Caco-2 (cell line): ENCODE measurements at regions of chr3 and their contacts with region 1.

Region 1: GRCh38 chr3:160163229-160163878 is 61.9 kb upstream of the C3orf80 start:
- DNase-seq: peak in 1 of 2 experiments; percentile 27
- H3K4me3 ChIP-seq: no peak overlapping the region
- H3K4me3 Mint-ChIP-seq: no peak overlapping the region
- H3K27ac Mint-ChIP-seq: no peak overlapping the region
- H3K4me1 ChIP-seq: peaks cover 7% of the 10 kb centered on the region
- H3K4me1 Mint-ChIP-seq: peaks cover 7% of the 10 kb centered on the region
- H3K27me3 ChIP-seq: no peaks in the 10 kb centered on the region
- H3K27me3 Mint-ChIP-seq: no peaks in the 10 kb centered on the region
- CTCF ChIP-seq: peak; percentile 36 to 55

Region 2: DNA sequence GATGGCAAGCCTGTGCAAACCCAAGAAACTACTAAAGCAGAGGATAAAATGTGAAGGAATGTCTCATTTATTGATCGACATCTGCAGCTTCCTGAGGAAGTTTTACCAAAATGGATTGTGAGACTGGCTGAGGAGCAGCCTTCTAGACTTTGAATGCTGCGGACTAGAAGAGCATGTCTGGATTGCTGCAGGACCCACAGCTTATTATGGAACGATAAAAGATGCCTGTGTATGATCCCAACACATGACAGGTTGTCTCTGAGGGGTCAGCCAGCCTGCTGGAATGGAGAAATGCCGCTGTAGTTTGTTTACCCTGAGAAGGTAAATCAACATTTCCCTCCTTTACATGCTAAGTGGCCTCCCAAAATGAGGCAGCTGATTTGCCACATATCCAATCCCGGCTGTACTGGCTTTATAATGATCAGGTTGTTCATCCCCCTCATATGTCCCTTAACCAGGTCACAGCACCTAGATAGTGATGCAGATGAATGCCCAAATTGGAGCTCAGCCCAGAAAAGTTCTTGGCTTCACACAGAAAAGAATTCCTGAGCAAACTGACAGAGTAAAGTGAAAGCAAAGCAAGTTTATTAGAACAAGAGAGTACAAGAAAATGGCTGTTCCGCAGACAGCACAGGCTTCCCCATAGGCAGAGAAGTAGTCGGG is 110.8 kb before region 1 on chr3:
- CTCF ChIA-PET with region 1: no interaction called
- POLR2A ChIA-PET with region 1: no interaction called
- intact Hi-C with region 1: no loop called
- DNase-seq: no peak
- H3K4me3 ChIP-seq: no peak overlapping the region
- H3K4me3 Mint-ChIP-seq: no peak overlapping the region
- H3K27ac Mint-ChIP-seq: no peak overlapping the region
- H3K4me1 ChIP-seq: no peaks in the 10 kb centered on the region
- H3K4me1 Mint-ChIP-seq: no peaks in the 10 kb centered on the region
- H3K27me3 ChIP-seq: no peaks in the 10 kb centered on the region
- H3K27me3 Mint-ChIP-seq: no peaks in the 10 kb centered on the region
- CTCF ChIP-seq: no peak

Region 3: DNA sequence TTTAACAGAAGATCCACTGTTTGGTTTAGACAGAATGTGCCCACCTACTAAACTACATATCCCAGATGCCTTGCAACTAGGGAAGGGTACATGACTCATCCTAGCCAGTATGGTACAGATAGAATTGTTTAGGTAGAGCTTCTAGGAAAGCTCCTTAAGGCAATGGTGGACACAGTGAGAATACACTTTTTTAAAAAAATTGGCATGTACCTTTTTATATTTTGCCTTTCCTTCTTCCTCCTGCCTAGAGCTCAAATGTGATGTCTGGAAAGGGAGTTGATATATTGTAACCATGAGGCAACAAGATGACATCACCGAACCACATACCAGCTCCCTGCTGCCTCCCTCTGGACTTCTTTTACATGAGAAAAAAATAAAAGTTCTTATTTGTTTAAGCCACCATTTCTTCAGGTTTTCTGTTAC is 47.5 kb after region 1 on chr3:
- CTCF ChIA-PET with region 1: interaction called, 17 read pairs
- POLR2A ChIA-PET with region 1: no interaction called
- intact Hi-C with region 1: loop called (anchors 1 kb)
- DNase-seq: peak in 1 of 2 experiments; percentile 51
- H3K4me3 ChIP-seq: no peak overlapping the region
- H3K4me3 Mint-ChIP-seq: no peak overlapping the region
- H3K27ac Mint-ChIP-seq: peak overlapping the region; percentile 65
- H3K4me1 ChIP-seq: peaks cover 3% of the 10 kb centered on the region; the same call in 1 of the 2 replicates
- H3K4me1 Mint-ChIP-seq: peaks cover 9% of the 10 kb centered on the region
- H3K27me3 ChIP-seq: no peaks in the 10 kb centered on the region
- H3K27me3 Mint-ChIP-seq: no peaks in the 10 kb centered on the region
- CTCF ChIP-seq: peak; percentile 19 to 40

Region 4: DNA sequence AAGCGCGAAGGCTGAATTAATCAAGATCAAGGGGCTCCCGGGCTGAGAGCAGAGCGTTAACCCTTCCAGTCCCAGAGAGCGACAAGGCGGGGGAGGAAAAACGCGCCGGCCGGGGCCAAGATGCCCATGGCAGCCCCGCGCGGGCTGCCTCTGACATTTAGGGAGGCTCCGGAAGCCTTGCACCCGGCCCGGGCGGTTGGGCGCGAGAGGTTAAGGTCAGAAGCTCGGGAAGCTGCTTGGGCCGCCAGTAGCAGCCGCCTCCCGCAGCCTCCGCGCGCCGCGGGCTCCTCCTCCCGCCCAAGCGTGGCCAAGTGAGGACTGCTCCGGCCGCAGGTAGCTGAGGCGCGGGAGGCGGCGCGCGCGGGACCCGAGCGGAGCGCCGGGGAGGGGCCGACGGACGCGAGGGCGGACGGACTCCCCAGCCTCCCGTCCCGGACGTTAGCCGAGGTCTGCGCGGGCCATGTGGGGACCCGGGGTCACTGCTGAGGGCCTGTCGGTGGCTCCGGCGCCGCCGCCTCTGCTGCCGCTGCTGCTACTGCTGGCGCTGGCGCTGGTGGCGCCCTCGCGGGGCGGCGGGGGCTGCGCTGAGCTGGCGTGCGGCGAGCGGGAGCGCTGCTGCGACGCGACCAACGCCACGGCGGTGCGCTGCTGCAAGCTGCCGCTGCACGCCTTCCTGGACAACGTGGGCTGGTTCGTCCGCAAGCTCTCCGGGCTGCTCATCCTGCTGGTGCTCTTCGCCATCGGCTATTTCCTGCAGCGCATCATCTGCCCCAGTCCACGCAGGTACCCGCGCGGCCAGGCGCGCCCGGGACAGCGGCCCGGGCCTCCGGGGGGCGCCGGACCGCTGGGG is 62.0 kb after region 1 on chr3 and contains the start of gene C3orf80:
- CTCF ChIA-PET with region 1: interaction called, 21 read pairs
- POLR2A ChIA-PET with region 1: no interaction called
- intact Hi-C with region 1: loop called (anchors 1 kb)
- DNase-seq: peak; percentile 67 to 80
- H3K4me3 ChIP-seq: peak within 1 kb of the TSS; percentile 86
- H3K4me3 Mint-ChIP-seq: peak within 1 kb of the TSS; percentile 90
- H3K27ac Mint-ChIP-seq: peak within 1 kb of the TSS; percentile 70
- H3K4me1 ChIP-seq: peaks cover 10% of the 10 kb centered on the region
- H3K4me1 Mint-ChIP-seq: no peaks in the 10 kb centered on the region
- H3K27me3 ChIP-seq: no peaks in the 10 kb centered on the region
- H3K27me3 Mint-ChIP-seq: no peaks in the 10 kb centered on the region
- CTCF ChIP-seq: peak; percentile 9 to 21
- total RNA-seq, gene C3orf80: 3.2 and 3.7 TPM in 2 replicates

Region 5: DNA sequence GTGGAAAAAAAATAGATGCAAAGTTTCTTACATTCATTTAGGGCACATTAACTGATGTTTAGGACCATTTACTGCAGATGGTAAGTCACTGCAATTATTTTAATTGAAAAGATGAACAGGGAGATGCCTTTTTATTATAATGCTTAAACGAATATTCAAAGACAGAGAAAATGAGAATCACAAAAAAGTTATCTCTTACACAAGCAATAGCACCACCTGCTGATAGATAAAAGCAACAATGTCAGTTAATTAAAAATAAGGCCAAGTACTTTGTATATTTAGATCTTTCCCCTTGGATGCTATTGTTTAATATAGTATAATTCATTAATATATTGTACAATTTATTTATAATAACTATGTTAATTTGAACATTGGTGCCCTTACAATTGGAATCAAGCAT is 179.8 kb after region 1 on chr3:
- CTCF ChIA-PET with region 1: interaction called, 3 read pairs
- POLR2A ChIA-PET with region 1: no interaction called
- intact Hi-C with region 1: loop called (anchors 1 kb)
- DNase-seq: no peak
- H3K4me3 ChIP-seq: no peak overlapping the region
- H3K4me3 Mint-ChIP-seq: no peak overlapping the region
- H3K27ac Mint-ChIP-seq: no peak overlapping the region
- H3K4me1 ChIP-seq: no peaks in the 10 kb centered on the region
- H3K4me1 Mint-ChIP-seq: no peaks in the 10 kb centered on the region
- H3K27me3 ChIP-seq: no peaks in the 10 kb centered on the region
- H3K27me3 Mint-ChIP-seq: no peaks in the 10 kb centered on the region
- CTCF ChIP-seq: peak; percentile 16 to 31

Region 6: DNA sequence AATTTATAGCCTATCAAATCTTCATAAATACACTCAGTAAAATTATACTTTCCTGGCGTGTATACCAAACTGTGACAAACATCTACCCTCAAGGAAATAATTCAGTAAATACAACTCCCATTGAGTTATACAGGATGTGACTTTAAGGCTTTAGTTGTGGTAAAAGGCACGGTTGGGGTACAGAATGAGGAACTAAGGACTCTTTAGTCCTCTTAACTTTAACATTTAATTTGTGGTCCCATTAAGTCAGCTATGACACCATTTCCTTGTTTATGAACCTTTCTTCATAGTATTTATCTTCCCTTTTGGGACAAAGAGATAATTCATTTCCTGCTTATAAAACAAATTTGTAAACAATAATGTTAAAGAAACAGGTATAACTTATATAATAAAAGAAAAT is 205.4 kb after region 1 on chr3:
- CTCF ChIA-PET with region 1: no interaction called
- POLR2A ChIA-PET with region 1: no interaction called
- intact Hi-C with region 1: no loop called
- DNase-seq: no peak
- H3K4me3 ChIP-seq: no peak overlapping the region
- H3K4me3 Mint-ChIP-seq: no peak overlapping the region
- H3K27ac Mint-ChIP-seq: no peak overlapping the region
- H3K4me1 ChIP-seq: no peaks in the 10 kb centered on the region
- H3K4me1 Mint-ChIP-seq: no peaks in the 10 kb centered on the region
- H3K27me3 ChIP-seq: no peaks in the 10 kb centered on the region
- H3K27me3 Mint-ChIP-seq: no peaks in the 10 kb centered on the region
- CTCF ChIP-seq: no peak

Region 7: DNA sequence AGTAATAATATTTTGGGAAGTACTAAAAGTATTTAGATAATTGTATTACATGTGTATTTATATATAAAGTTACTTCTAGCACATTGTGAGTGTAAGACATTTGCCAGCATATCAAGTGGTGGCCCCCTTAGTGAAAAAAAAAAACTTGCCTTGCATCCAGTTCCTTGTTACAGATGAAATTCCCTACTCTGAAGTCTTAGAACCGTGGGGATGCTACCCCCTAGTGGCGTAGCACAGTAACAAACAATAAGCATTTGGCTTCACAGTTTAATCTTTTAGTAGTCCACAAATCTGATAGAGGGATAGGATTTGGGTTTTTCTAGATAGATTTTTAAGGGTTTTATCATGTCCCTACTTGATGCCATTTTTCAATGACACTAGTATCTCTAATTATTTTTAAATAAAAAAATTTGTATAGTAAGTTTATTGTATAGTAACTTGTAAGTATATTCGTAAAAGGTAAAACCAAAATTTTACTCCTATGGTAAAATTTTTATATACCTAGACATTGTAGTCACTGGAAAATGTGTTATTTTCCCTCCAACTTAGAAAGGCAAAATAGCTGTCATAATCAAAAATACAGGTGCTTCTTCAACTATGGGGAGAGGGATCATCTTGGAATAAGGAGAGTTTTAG is 250.4 kb after region 1 on chr3:
- CTCF ChIA-PET with region 1: no interaction called
- POLR2A ChIA-PET with region 1: no interaction called
- intact Hi-C with region 1: loop called (anchors 1 kb)
- DNase-seq: peak; percentile 70 to 81
- H3K4me3 ChIP-seq: no peak overlapping the region
- H3K4me3 Mint-ChIP-seq: no peak overlapping the region
- H3K27ac Mint-ChIP-seq: no peak overlapping the region
- H3K4me1 ChIP-seq: no peaks in the 10 kb centered on the region
- H3K4me1 Mint-ChIP-seq: no peaks in the 10 kb centered on the region
- H3K27me3 ChIP-seq: no peaks in the 10 kb centered on the region
- H3K27me3 Mint-ChIP-seq: no peaks in the 10 kb centered on the region
- CTCF ChIP-seq: peak; percentile 81 to 83

Region 8: DNA sequence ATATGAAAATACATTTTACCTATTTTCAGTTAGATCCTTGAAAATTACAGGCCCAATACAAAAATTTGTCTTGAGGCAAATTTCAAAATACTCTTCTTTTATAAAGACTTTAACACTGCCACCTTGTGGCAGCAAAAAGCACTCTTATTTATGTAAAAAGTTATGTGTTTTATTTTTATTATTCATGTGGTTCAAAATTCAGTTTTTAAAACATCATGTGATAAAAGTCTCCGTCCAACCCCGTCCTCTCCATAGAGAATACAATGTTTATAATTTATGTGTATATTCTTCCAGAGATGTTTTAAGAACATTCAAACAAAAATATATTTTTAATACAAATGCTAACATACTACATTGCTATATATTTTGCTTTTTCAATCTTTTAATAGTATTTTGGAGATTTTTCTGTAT is 323.1 kb after region 1 on chr3:
- CTCF ChIA-PET with region 1: no interaction called
- POLR2A ChIA-PET with region 1: no interaction called
- intact Hi-C with region 1: loop called (anchors 1 kb)
- DNase-seq: no peak
- H3K4me3 ChIP-seq: no peak overlapping the region
- H3K4me3 Mint-ChIP-seq: no peak overlapping the region
- H3K27ac Mint-ChIP-seq: no peak overlapping the region
- H3K4me1 ChIP-seq: no peaks in the 10 kb centered on the region
- H3K4me1 Mint-ChIP-seq: no peaks in the 10 kb centered on the region
- H3K27me3 ChIP-seq: no peaks in the 10 kb centered on the region
- H3K27me3 Mint-ChIP-seq: no peaks in the 10 kb centered on the region
- CTCF ChIP-seq: peak; percentile 50 to 62